Brain microvascular endothelial cell (primary cell): ENCODE measurements at regions of chr7 and their contacts with region 1.

Region 1: DNA sequence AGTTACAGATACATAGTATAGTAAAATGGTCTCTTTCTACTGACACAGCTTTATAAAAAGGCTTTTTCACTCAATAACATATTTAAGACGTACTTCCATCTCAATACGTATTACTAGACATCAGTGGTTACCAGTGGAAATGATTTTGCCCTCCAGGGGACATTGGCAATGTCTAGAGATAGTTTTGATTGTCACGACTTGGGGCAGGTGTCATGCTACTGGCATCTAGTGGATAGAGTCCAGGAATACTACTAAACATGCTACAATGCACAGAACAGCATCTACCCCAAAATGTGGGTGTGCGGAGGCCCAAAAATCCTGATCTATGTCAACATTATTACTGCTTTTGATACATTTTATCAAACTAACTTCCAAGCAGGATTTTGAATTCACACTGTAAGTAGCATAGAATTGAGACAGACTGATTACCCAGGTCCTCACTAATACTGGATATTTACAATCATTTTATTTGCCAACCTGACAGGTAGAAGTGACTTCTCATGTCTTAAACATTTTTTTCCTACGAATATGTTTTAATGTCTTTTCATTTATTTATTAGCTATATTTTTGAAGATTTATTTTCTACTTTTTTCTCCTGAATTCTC is 53.8 kb downstream of the HGF start:
- DNase-seq: peak; percentile 79
- H3K4me3 ChIP-seq: no peak overlapping the region
- H3K27ac ChIP-seq: peak overlapping the region; percentile 45
- H3K27me3 ChIP-seq: no peaks in the 10 kb centered on the region
- CTCF ChIP-seq: peak; percentile 73

Region 2: DNA sequence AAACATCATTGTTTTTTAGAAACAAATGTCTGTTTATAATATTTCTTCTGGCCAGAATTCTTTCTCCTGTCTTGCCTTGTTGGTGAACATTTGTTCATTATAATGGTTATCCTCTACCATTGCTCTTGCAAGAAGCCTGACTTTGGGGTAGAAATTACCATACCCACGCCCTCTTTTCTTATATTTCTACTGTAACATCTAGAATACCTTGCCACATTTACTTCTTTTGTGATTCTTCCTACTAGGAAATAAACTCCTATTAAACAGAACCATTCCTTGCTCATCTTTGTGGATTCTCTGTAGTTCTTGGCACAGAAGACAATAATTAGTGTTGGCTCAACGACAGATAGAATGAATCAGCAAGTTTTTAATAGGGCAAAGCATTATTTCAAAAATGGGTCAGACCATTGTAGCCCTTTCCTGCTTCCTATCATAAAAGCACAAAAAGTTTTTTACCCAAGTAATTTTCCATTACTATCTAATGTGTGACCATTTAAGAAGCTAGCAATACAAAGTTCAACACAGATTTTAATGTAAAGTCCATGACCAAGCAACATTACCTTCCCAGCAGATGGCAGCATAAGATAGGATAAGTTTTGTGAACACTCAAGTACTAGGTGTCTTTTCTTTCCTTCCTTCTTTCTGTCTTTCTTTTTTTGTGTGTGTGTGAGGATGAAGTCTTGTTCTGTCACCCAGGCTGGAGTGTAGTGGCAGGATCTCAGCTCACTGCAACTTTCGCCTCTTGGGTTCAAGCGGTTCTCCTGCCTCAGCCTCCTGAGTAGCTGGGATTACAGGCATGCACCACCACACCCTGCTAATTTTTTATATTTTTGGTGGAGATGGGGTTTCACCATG is 216.6 kb before region 1 on chr7:
- in situ Hi-C with region 1: loop called (anchors 25 kb)
- DNase-seq: peak; percentile 72
- H3K4me3 ChIP-seq: no peak overlapping the region
- H3K27ac ChIP-seq: peak overlapping the region; percentile 72
- H3K27me3 ChIP-seq: no peaks in the 10 kb centered on the region
- CTCF ChIP-seq: peak; percentile 55

Region 3: GRCh38 chr7:81638216-81638615 is 77.9 kb before region 1 on chr7:
- in situ Hi-C with region 1: no loop called
- DNase-seq: peak; percentile 90
- H3K4me3 ChIP-seq: no peak overlapping the region
- H3K27ac ChIP-seq: peak overlapping the region; percentile 93
- H3K27me3 ChIP-seq: no peaks in the 10 kb centered on the region
- CTCF ChIP-seq: no peak